ENCODE measurements at regions of chr6 and their contacts with region 1.

Region 1: DNA sequence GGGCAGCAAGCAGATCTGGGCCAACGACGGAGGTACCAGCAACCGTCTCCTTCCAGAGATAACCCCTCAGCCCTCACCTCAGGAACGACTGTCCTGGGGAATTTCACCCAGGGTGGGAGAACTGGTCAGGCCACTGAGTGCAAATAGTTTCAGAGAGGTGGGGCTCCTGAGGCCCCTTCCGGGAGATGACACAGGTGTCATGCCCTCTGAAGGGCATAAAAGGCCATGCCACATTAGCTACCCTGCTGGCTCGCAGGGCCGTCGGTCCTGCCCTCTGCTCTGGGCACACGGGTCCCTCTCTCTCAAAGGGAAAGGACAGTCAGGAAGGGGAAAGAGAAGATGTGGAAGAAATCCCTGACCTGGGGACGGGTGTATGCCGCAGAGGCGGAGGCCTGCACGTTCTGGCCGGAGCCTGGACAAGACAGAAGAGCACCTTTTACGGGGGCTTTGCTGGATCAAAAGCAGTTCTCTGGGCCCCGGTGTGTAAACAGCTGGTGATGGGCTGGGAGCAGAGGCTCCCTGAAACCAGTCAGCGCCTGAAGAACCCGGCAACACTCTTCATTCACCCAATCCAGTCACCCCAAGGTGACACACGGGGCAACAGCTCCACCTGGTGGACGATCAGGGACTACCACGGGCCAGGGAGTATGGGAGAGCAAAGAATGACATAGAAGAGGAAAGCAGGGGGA is 6.4 kb upstream of the TAF8 start:
- DNase-seq: peak; percentile 88
- ATAC-seq: peak; percentile 88
- H3K4me3 ChIP-seq: peak overlapping the region; percentile 50 to 76 (median 53)
- H3K27ac ChIP-seq: no peak overlapping the region
- H3K4me1 ChIP-seq: peaks cover 49% of the 10 kb centered on the region
- H3K27me3 ChIP-seq: no peaks in the 10 kb centered on the region; a peak in 2 of 5 replicates
- CTCF ChIP-seq: peak; percentile 99
- EP300 ChIP-seq: no peak
- POLR2A ChIP-seq: no peak
- RAD21 ChIP-seq: peak; percentile 98

Region 2: GRCh38 chr6:41638002-41638934 is 405.7 kb before region 1 on chr6 and contains the start of gene MDFI:
- CTCF ChIA-PET with region 1: no interaction called
- POLR2A ChIA-PET with region 1: no interaction called
- in situ Hi-C with region 1: no loop called
- intact Hi-C with region 1: no loop called
- DNase-seq: no peak
- ATAC-seq: no peak; the same call in 1 of the 3 replicates
- H3K4me3 ChIP-seq: peak within 1 kb of the TSS in 2 of 3 experiments; percentile 48 to 51; a peak in 3 of 6 replicates
- H3K27ac ChIP-seq: no peak within 1 kb of the TSS
- H3K4me1 ChIP-seq: peaks cover 30% of the 10 kb centered on the region
- H3K27me3 ChIP-seq: peaks cover 10 to 87% of the 10 kb centered on the region in 2 experiments
- CTCF ChIP-seq: no peak
- EP300 ChIP-seq: no peak
- POLR2A ChIP-seq: no peak
- RAD21 ChIP-seq: no peak
- total RNA-seq, gene MDFI: not detected in 2 replicates

Region 3: GRCh38 chr6:41713161-41713649 is 330.7 kb before region 1 on chr6:
- CTCF ChIA-PET with region 1: no interaction called
- POLR2A ChIA-PET with region 1: no interaction called
- in situ Hi-C with region 1: loop called (anchors 10 kb)
- intact Hi-C with region 1: no loop called
- DNase-seq: no peak
- ATAC-seq: peak; percentile 16
- H3K4me3 ChIP-seq: no peak overlapping the region
- H3K27ac ChIP-seq: no peak overlapping the region
- H3K4me1 ChIP-seq: peaks cover 7% of the 10 kb centered on the region; the same call in 1 of the 2 replicates
- H3K27me3 ChIP-seq: no peaks in the 10 kb centered on the region
- CTCF ChIP-seq: no peak
- EP300 ChIP-seq: no peak
- POLR2A ChIP-seq: no peak
- RAD21 ChIP-seq: no peak

Region 4: GRCh38 chr6:41779793-41780545 is 264.0 kb before region 1 on chr6 and contains the start of gene FRS3:
- CTCF ChIA-PET with region 1: interaction called, 24 read pairs
- POLR2A ChIA-PET with region 1: interaction called, 4 read pairs
- in situ Hi-C with region 1: loop called (anchors 5 kb)
- intact Hi-C with region 1: loop called (anchors 1 kb)
- DNase-seq: peak; percentile 95
- ATAC-seq: peak; percentile 90
- H3K4me3 ChIP-seq: peak within 1 kb of the TSS; percentile 82 to 93 (median 92)
- H3K27ac ChIP-seq: peak within 1 kb of the TSS; percentile 24
- H3K4me1 ChIP-seq: peaks cover 34% of the 10 kb centered on the region
- H3K27me3 ChIP-seq: no peaks in the 10 kb centered on the region; a peak in 2 of 5 replicates
- CTCF ChIP-seq: peak; percentile 99
- EP300 ChIP-seq: peak; percentile 61 to 75; a peak in 3 of 4 replicates
- POLR2A ChIP-seq: no peak
- RAD21 ChIP-seq: peak; percentile 100
- total RNA-seq, gene FRS3: 1.5 and 3.0 TPM in 2 replicates

Region 5: DNA sequence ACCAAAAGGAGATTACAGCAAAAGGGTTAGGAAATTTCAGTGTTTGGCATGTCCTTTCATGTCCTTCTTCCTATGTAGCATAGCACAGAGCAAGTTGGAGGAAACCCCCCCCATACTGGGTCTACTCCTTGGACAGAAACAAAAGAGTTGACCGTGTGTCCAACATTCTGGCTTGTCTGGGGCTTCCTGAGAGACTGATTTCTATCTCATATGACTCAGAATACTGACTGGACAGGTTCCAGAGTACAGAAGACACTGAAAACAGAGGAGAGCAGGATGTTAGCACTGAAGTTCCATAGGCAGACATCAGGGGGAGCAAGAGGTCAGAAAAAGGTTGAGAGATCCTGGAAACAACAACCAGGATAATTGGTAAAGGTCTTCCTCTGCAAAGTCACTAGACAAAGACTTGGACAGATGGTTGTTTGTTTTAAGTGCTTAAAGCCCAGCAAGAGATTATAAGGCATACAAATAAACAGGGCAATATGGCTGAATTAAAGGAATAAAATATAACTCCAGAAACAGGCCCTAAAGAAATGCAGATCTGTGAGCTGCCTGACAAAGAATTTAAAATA is 197.2 kb before region 1 on chr6:
- CTCF ChIA-PET with region 1: interaction called, 40 read pairs
- POLR2A ChIA-PET with region 1: interaction called, 5 read pairs
- in situ Hi-C with region 1: loop called (anchors 5 kb)
- intact Hi-C with region 1: loop called (anchors 1 kb)
- DNase-seq: peak; percentile 93
- ATAC-seq: peak; percentile 100
- H3K4me3 ChIP-seq: peak overlapping the region in 1 of 3 experiments; percentile 24; a peak in 1 of 6 replicates
- H3K27ac ChIP-seq: peak overlapping the region; percentile 68
- H3K4me1 ChIP-seq: peaks cover 16% of the 10 kb centered on the region
- H3K27me3 ChIP-seq: no peaks in the 10 kb centered on the region
- CTCF ChIP-seq: peak; percentile 93
- EP300 ChIP-seq: no peak
- POLR2A ChIP-seq: peak in 1 of 2 experiments; percentile 34; a peak in 1 of 4 replicates
- RAD21 ChIP-seq: peak; percentile 85

Region 6: GRCh38 chr6:41920921-41921711 is 122.8 kb before region 1 on chr6 and contains the starts of genes BYSL and MED20:
- CTCF ChIA-PET with region 1: no interaction called
- POLR2A ChIA-PET with region 1: interaction called, 12 read pairs
- in situ Hi-C with region 1: no loop called
- intact Hi-C with region 1: loop called (anchors 2 kb)
- DNase-seq: peak; percentile 92
- ATAC-seq: peak; percentile 91
- H3K4me3 ChIP-seq: peak within 1 kb of the TSS; percentile 80 to 93 (median 86)
- H3K27ac ChIP-seq: peak within 1 kb of the TSS; percentile 96
- H3K4me1 ChIP-seq: peaks cover 41% of the 10 kb centered on the region
- H3K27me3 ChIP-seq: no peaks in the 10 kb centered on the region; a peak in 1 of 5 replicates
- CTCF ChIP-seq: peak; percentile 96
- EP300 ChIP-seq: no peak; a peak in 1 of 4 replicates
- POLR2A ChIP-seq: peak; percentile 77 to 89
- RAD21 ChIP-seq: no peak; the same call in 1 of the 2 replicates
- total RNA-seq, gene BYSL: 27.9 and 37.3 TPM in 2 replicates
- total RNA-seq, gene MED20: 41.1 and 56.3 TPM in 2 replicates

Region 7: DNA sequence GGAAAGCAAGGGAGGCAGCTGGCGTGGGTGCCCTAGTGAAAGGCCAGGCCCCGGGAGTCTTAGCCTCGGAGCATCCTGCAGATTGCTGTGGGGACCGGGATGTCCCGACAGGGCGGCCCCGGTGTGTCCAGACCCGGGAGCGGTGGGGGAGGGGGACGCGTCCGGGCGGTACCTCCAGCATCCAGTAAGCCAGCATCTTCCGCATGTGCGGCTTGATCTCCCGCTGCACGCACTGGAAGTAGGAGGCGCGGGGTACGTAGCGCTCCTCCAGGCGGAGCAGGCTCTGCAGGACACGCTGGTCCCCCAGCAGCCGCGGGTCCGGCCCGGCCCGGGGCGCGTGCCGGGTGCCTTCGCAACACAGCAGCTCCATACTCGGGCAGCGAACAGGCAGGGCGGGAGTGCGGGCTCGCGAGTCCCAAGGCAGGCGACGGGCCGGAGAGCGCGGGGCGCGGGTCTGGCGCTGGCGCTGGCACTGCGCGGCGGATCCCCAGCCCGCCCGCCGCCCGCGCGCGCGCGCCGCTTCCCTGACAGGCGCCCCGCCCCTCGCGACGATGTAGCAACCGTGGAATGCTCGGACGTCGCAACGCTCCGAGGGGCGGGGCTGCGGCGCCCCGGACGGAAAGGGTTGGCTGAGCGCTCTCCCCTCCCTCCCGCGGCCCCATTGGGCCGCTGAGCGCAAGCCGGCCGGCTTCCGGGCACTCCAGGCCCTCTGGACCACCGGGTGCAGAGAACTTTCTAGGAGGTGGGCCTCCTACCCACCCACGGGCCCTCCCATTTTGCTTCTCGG is 102.5 kb before region 1 on chr6 and contains the start of gene CCND3:
- CTCF ChIA-PET with region 1: interaction called, 7 read pairs
- POLR2A ChIA-PET with region 1: interaction called, 4 read pairs
- in situ Hi-C with region 1: loop called (anchors 5 kb)
- intact Hi-C with region 1: loop called (anchors 1 kb)
- DNase-seq: peak; percentile 85
- ATAC-seq: peak; percentile 86
- H3K4me3 ChIP-seq: peak within 1 kb of the TSS; percentile 74 to 91 (median 75)
- H3K27ac ChIP-seq: no peak within 1 kb of the TSS
- H3K4me1 ChIP-seq: peaks cover 31% of the 10 kb centered on the region
- H3K27me3 ChIP-seq: no peaks in the 10 kb centered on the region
- CTCF ChIP-seq: no peak
- EP300 ChIP-seq: 0 out of 4 replicates have a peak, but pooled peaks of 1 of the 2 experiments have one; percentile 34
- POLR2A ChIP-seq: peak; percentile 49 to 50; a peak in 3 of 4 replicates
- RAD21 ChIP-seq: no peak
- total RNA-seq, gene CCND3: 6.9 and 7.2 TPM in 2 replicates

Region 8: DNA sequence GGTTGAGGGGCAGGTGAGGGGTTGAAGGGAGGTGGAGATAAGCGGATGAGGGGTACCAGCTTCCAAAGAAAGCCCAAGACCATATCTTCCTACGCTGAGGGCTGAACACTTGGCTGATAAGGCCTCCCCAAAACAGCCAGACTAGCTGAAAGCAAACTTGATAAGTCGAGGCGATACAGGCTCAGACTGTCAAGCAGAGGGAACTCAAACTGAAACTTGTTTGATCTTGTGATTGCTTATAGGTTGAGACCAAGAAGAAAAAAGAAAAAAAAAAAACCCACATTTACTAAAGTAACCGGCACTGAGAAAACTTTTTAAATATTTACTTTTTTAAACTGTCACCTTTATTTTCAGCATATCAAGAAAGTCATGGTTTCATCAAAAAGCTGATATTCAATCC is 334.2 kb after region 1 on chr6:
- CTCF ChIA-PET with region 1: no interaction called
- POLR2A ChIA-PET with region 1: no interaction called
- in situ Hi-C with region 1: no loop called
- intact Hi-C with region 1: no loop called
- DNase-seq: no peak
- ATAC-seq: no peak
- H3K4me3 ChIP-seq: no peak overlapping the region
- H3K27ac ChIP-seq: no peak overlapping the region
- H3K4me1 ChIP-seq: no peaks in the 10 kb centered on the region
- H3K27me3 ChIP-seq: peaks cover 2 to 28% of the 10 kb centered on the region in 2 experiments; a peak in 4 of 5 replicates
- CTCF ChIP-seq: no peak
- EP300 ChIP-seq: no peak
- POLR2A ChIP-seq: no peak
- RAD21 ChIP-seq: no peak